HepG2 (cell line): ENCODE measurements at regions of chr1 and their contacts with region 1.

Region 1: GRCh38 chr1:205523891-205524793 is 19.7 kb downstream of the CDK18 start:
- DNase-seq: peak; percentile 68
- ATAC-seq: peak; percentile 70
- H3K4me3 ChIP-seq: no peak overlapping the region
- H3K27ac ChIP-seq: no peak overlapping the region
- H3K4me1 ChIP-seq: peaks cover 23% of the 10 kb centered on the region
- H3K27me3 ChIP-seq: no peaks in the 10 kb centered on the region
- CTCF ChIP-seq: peak; percentile 95
- EP300 ChIP-seq: no peak
- POLR2A ChIP-seq: no peak
- RAD21 ChIP-seq: peak; percentile 91

Region 2: DNA sequence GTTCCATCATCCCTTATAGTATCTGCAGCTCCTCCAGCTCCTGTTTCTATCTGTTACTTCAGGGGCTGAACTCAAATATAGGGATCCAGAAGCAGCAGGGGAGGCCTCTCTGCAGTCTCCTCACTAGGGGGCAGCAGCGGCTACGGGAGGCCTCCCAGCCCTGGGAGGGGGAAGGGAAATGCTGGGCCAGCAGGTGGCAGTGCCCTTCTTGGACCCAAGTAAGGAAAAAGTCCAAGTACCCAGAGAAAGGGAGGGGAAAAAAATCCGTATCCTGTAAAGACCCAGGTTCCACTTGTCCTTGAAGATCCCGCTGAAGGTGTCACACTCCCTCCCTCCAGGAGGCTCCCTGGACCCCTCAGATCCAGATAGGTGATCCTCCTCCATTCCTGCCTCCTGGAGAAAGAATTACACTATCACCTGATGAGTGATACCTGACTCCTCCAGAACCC is 188.5 kb before region 1 on chr1:
- CTCF ChIA-PET with region 1: interaction called, 8 read pairs
- POLR2A ChIA-PET with region 1: no interaction called
- in situ Hi-C with region 1: no loop called
- intact Hi-C with region 1: loop called (anchors 1 kb)
- DNase-seq: peak; percentile 68
- ATAC-seq: peak; percentile 92
- H3K4me3 ChIP-seq: no peak overlapping the region
- H3K27ac ChIP-seq: no peak overlapping the region
- H3K4me1 ChIP-seq: no peaks in the 10 kb centered on the region
- H3K27me3 ChIP-seq: peaks cover 4 to 43% of the 10 kb centered on the region in 2 experiments
- CTCF ChIP-seq: peak; percentile 92
- EP300 ChIP-seq: no peak
- POLR2A ChIP-seq: no peak
- RAD21 ChIP-seq: peak; percentile 81

Region 3: DNA sequence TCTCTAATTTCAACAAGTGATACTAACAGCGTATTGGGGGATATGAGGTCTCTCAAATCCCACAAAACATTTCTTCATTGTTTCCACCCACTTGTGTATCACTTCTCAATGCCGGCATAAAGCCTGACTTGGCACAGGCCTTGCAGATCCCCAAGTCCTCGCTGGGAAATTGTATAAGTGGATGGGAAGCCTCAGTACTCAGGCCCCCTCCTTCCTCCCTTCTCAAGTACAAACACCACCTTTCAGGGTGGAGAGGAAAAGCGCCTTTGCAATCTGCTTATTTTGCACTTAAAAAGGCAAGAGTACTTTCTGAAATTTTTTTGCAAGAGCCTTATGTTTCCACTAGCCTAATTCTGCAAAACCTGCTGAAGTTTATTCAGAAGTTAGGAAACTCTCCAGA is 141.6 kb before region 1 on chr1:
- CTCF ChIA-PET with region 1: no interaction called
- POLR2A ChIA-PET with region 1: no interaction called
- in situ Hi-C with region 1: no loop called
- intact Hi-C with region 1: no loop called
- DNase-seq: no peak
- ATAC-seq: no peak
- H3K4me3 ChIP-seq: no peak overlapping the region
- H3K27ac ChIP-seq: no peak overlapping the region
- H3K4me1 ChIP-seq: peaks cover 16% of the 10 kb centered on the region
- H3K27me3 ChIP-seq: peaks cover 0 to 36% of the 10 kb centered on the region in 2 experiments; a peak in 3 of 5 replicates
- CTCF ChIP-seq: no peak
- EP300 ChIP-seq: no peak
- POLR2A ChIP-seq: no peak
- RAD21 ChIP-seq: no peak

Region 4: DNA sequence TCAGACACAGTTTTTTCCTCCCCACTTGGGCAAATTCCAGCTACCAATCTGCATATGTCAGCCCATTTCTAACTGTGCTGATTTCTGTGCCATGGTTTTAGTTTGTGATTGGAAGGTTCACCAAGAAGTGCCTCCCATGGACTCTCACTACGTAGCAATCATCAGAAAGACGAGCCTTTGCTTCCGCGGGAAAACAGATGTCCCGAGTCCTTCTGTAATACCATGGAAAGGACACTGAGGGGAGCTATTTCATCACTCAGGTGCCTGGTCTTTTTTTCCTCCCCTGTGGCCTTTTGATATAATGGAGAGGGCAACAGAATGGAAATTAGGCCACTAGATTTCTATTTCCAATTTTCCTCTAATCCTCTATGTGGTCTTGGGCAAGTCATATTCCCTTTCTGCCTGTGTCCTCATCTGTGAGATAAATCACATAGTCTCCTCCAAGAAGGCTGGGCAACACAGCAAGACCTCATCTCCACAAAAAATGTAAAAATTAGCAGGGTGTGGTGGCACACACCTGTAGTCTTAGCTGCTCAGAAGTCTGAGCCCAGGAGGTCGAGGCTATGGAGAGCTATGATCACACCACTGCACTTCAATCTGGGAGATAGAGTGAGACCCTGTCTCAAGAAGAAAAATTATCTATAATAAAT is 127.0 kb before region 1 on chr1:
- CTCF ChIA-PET with region 1: interaction called, 21 read pairs
- POLR2A ChIA-PET with region 1: no interaction called
- in situ Hi-C with region 1: loop called (anchors 5 kb)
- intact Hi-C with region 1: loop called (anchors 1 kb)
- DNase-seq: peak; percentile 64
- ATAC-seq: peak; percentile 67
- H3K4me3 ChIP-seq: no peak overlapping the region
- H3K27ac ChIP-seq: no peak overlapping the region
- H3K4me1 ChIP-seq: peaks cover 12% of the 10 kb centered on the region
- H3K27me3 ChIP-seq: no peaks in the 10 kb centered on the region; a peak in 1 of 5 replicates
- CTCF ChIP-seq: peak; percentile 87
- EP300 ChIP-seq: no peak
- POLR2A ChIP-seq: no peak
- RAD21 ChIP-seq: peak; percentile 80

Region 5: DNA sequence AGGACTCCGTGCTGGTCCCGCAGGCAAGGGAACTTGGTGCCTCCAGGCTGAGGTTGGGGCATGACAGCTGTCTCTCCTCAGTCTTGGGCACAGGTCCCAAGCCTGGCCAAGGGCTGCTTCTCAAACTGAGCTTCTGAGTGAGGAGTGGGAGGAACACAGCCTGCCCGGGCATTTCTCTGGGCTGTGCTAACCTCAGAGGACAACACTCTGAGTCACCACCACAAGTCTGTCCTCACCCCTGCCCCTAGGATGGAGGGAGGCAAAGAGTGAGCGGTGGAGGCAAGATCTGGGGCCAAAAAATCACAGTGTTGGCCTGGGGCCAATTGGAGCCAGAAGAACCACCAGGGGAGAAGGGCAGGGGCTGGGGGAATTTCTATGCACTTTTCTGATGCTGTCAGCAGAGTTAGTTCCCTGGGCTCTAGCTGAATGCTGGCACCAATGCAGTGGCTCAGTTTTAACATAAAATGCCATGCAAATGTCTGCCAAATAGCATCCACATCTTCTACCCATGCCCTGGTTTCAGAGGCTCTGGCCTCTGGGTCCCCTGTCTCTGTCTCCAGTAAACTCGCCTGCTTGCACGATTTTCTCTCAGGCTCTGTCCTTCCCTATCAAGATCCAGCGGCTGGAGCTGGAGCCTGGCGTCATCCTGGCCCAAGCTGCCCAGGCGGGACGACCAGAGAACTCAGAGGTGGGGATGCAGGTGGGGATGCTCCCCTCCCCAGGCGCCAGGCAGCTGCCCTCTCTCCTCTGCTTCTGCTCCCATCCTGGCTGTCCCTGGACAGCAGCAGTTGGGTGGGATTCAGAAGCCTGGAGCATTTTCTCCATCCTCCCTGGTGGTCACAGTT is 30.7 kb before region 1 on chr1:
- CTCF ChIA-PET with region 1: interaction called, 86 read pairs
- POLR2A ChIA-PET with region 1: interaction called, 12 read pairs
- in situ Hi-C with region 1: loop called (anchors 5 kb)
- intact Hi-C with region 1: loop called (anchors 1 kb)
- DNase-seq: peak; percentile 41
- ATAC-seq: peak; percentile 40
- H3K4me3 ChIP-seq: peak overlapping the region in 1 of 3 experiments; percentile 49; a peak in 1 of 6 replicates
- H3K27ac ChIP-seq: no peak overlapping the region
- H3K4me1 ChIP-seq: peaks cover 85% of the 10 kb centered on the region
- H3K27me3 ChIP-seq: peaks cover 0 to 14% of the 10 kb centered on the region in 2 experiments; a peak in 2 of 5 replicates
- CTCF ChIP-seq: no peak
- EP300 ChIP-seq: no peak
- POLR2A ChIP-seq: no peak
- RAD21 ChIP-seq: no peak

Region 6: GRCh38 chr1:205554026-205554811 is 30.1 kb after region 1 on chr1:
- CTCF ChIA-PET with region 1: no interaction called
- POLR2A ChIA-PET with region 1: no interaction called
- in situ Hi-C with region 1: no loop called
- intact Hi-C with region 1: no loop called
- DNase-seq: no peak
- ATAC-seq: no peak
- H3K4me3 ChIP-seq: no peak overlapping the region
- H3K27ac ChIP-seq: no peak overlapping the region
- H3K4me1 ChIP-seq: no peaks in the 10 kb centered on the region
- H3K27me3 ChIP-seq: peaks cover 0 to 3% of the 10 kb centered on the region in 2 experiments; a peak in 2 of 5 replicates
- CTCF ChIP-seq: no peak
- EP300 ChIP-seq: no peak
- POLR2A ChIP-seq: no peak
- RAD21 ChIP-seq: no peak

Region 7: GRCh38 chr1:205950280-205950679 is 426.1 kb after region 1 on chr1:
- CTCF ChIA-PET with region 1: no interaction called
- POLR2A ChIA-PET with region 1: no interaction called
- in situ Hi-C with region 1: no loop called
- intact Hi-C with region 1: no loop called
- DNase-seq: no peak
- ATAC-seq: no peak
- H3K4me3 ChIP-seq: no peak overlapping the region
- H3K27ac ChIP-seq: no peak overlapping the region
- H3K4me1 ChIP-seq: peaks cover 2% of the 10 kb centered on the region
- H3K27me3 ChIP-seq: peaks cover 1 to 38% of the 10 kb centered on the region in 2 experiments; a peak in 3 of 5 replicates
- CTCF ChIP-seq: no peak
- EP300 ChIP-seq: no peak
- POLR2A ChIP-seq: no peak
- RAD21 ChIP-seq: no peak